Lower leg skin (tissue), 4 donors: ENCODE measurements at regions of chrX and their contacts with region 1.

Region 1: GRCh38 chrX:1453951-1454785 is 1.5 kb upstream of the ASMTL start:
- DNase-seq: peak; percentile 87 to 98
- H3K4me3 ChIP-seq: no peak overlapping the region
- CTCF ChIP-seq: peak in 1 of 3 donors; percentile 82
- POLR2A ChIP-seq: no peak

Region 2: DNA sequence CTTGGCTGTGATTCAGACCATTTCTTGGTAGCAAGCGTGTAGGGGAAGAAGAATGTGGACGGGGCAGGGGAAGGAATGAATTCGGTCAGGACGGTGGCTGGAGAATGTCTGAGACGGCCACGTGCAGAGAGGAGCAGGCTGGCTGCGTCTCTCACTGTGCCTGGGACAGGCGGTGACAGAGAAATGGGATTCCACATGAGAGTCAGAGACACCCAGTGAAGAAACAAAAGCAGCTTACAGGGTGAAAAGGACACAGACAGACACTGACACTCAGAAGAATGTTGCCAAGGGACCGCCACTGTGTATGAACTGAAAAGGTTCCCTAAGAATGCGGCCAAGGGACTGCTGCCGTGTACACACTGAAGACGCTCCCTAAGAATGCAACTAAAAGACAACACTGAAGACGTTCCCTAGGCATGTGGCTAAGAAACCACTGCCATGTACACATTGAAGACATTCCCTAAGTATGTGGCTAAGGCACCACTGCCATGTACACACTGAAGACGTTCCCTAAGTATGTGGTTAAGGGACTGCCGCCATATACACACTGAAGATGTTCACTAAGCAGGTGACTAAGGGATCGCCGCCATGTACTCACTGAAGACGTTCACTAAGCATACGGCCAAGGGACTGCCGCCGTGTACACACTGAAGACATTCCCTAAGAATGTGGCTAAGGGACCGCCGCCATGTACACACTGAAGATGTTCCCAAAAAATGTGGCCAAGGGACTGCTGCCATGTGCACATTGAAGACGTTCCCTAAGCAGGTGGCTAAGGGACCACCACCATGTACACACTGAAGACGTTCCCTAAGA is 997.5 kb after region 1 on chrX:
- intact Hi-C with region 1: no loop called
- DNase-seq: no peak
- H3K4me3 ChIP-seq: no peak overlapping the region
- CTCF ChIP-seq: no peak
- POLR2A ChIP-seq: no peak

Region 3: DNA sequence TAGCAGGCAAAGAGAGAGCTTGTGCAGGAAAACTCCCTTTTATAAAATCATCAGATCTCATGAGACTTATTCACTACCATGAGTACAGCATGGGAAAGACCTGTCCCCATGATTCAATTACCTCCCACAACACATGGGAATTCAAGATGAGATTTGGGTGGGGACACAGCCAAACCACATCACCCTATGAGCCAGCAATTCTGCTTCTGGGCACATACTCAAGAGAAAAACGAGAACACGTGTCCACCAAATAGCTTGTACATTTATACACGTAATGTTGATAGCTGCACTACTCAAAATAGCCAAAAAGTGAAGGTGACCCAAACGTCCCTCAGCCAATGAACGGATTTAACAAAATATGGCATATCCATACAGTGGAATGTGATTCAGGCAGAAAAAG is 1141.1 kb after region 1 on chrX:
- intact Hi-C with region 1: loop called (anchors 10 kb)
- DNase-seq: no peak
- H3K4me3 ChIP-seq: no peak overlapping the region
- CTCF ChIP-seq: no peak
- POLR2A ChIP-seq: no peak